ENCODE measurements at regions of chr18 and their contacts with region 1.

Region 1: DNA sequence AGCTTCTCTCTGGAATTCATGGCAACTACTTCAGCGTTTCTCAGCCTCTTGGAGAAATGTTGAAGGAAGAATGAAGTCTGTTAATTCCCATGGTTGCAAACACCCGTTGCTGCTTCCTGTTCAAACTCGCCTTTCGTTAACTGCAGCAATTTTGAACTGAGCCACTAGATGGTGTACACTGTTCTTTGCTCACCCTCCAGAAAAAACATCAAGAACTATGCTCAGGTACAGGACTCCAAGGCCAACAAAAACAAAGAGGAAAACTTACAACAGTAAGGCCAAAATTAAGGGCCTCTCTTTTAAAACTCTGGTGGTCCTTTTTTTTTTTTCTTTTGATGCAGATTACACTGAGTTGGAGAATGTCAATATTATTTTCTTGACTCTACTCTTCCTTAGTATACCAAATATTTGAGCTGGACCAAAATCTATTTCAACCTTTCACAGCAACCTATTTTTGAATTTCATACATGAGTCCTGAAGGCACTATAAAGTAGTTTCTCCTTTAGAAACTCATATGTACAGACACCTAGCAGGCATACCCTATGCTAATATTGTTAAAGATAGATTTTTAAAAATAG is 58.2 kb downstream of the KLHL14 start:
- H3K4me3 ChIP-seq: no peak overlapping the region
- H3K27ac ChIP-seq: no peak overlapping the region
- H3K4me1 ChIP-seq: no peaks in the 10 kb centered on the region
- CTCF ChIP-seq: peak; percentile 74

Region 2: GRCh38 chr18:32674491-32674890 is 40.2 kb before region 1 on chr18:
- CTCF ChIA-PET with region 1: interaction called, 11 read pairs
- POLR2A ChIA-PET with region 1: no interaction called
- H3K4me3 ChIP-seq: no peak overlapping the region
- H3K27ac ChIP-seq: no peak overlapping the region
- H3K4me1 ChIP-seq: no peaks in the 10 kb centered on the region
- CTCF ChIP-seq: no peak

Region 3: GRCh38 chr18:32696376-32696775 is 18.3 kb before region 1 on chr18:
- CTCF ChIA-PET with region 1: interaction called, 10 read pairs
- POLR2A ChIA-PET with region 1: no interaction called
- H3K4me3 ChIP-seq: no peak overlapping the region
- H3K27ac ChIP-seq: no peak overlapping the region
- H3K4me1 ChIP-seq: no peaks in the 10 kb centered on the region
- CTCF ChIP-seq: no peak

Region 4: GRCh38 chr18:32919799-32920198 is 205.1 kb after region 1 on chr18:
- CTCF ChIA-PET with region 1: interaction called, 21 read pairs
- POLR2A ChIA-PET with region 1: no interaction called
- H3K4me3 ChIP-seq: no peak overlapping the region
- H3K27ac ChIP-seq: no peak overlapping the region
- H3K4me1 ChIP-seq: 0 out of 2 replicates have a peak, but pooled peaks cover 3% of the 10 kb centered on the region
- CTCF ChIP-seq: peak; percentile 79

Measured in HEK293 (cell line).